ENCODE measurements at regions of chrX and their contacts with region 1.

Region 1: DNA sequence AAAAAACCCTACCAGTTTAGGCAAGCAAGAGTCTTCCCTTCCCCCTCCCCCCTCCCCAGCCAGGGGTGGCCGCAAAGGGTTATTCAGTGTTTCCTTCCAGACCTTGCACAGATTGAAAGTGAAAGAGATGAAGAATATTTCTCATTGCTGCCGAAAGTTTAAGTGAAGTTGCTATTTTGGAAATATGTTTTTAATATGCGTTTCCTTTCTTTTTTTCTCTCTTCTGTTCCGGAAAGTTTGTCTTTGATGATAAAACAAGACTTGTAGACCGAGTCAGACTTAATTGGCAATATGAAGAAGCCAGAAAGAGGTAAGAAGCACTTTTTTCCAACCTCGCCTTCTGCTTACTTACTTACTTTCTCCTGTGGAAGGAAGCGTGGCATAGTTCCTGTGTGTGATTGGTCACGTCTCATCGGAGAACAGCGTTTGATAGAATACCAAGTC is 58.5 kb upstream of the CLCN4 start:
- DNase-seq: peak; percentile 81
- ATAC-seq: peak; percentile 71
- H3K4me3 Mint-ChIP-seq: peak overlapping the region; percentile 67
- H3K27ac Mint-ChIP-seq: peak overlapping the region; percentile 94
- H3K4me1 Mint-ChIP-seq: peaks cover 49% of the 10 kb centered on the region
- H3K27me3 Mint-ChIP-seq: no peaks in the 10 kb centered on the region

Region 2: DNA sequence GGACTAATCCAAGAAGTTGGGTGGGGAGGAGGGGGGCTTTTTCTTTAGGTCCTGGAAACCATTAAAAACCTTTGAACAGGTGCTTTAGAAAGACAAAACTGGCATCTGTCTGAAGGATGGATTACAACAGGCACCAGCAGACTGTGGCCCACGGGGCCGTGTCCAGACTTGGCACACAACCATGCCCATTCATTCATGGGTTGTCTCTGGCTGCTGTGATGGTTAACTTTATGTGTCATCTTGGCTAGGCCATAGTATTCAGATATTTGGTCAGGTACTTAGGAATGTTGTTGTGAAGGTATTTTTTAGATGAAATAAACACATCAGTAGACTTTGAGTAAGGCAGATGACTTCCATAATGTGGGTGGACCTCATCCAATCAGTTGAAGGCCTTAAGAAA is 587.9 kb before region 1 on chrX:
- CTCF ChIA-PET with region 1: no interaction called
- POLR2A ChIA-PET with region 1: no interaction called
- intact Hi-C with region 1: no loop called
- DNase-seq: no peak
- ATAC-seq: no peak
- H3K4me3 Mint-ChIP-seq: no peak overlapping the region
- H3K27ac Mint-ChIP-seq: no peak overlapping the region
- H3K4me1 Mint-ChIP-seq: peaks cover 14% of the 10 kb centered on the region
- H3K27me3 Mint-ChIP-seq: no peaks in the 10 kb centered on the region

Region 3: GRCh38 chrX:10083809-10084208 is 14.5 kb before region 1 on chrX:
- CTCF ChIA-PET with region 1: interaction called, 5 read pairs
- POLR2A ChIA-PET with region 1: interaction called, 7 read pairs
- intact Hi-C with region 1: loop called (anchors 1 kb)
- DNase-seq: no peak
- ATAC-seq: no peak
- H3K4me3 Mint-ChIP-seq: no peak overlapping the region
- H3K27ac Mint-ChIP-seq: no peak overlapping the region
- H3K4me1 Mint-ChIP-seq: peaks cover 35% of the 10 kb centered on the region
- H3K27me3 Mint-ChIP-seq: no peaks in the 10 kb centered on the region

Region 4: DNA sequence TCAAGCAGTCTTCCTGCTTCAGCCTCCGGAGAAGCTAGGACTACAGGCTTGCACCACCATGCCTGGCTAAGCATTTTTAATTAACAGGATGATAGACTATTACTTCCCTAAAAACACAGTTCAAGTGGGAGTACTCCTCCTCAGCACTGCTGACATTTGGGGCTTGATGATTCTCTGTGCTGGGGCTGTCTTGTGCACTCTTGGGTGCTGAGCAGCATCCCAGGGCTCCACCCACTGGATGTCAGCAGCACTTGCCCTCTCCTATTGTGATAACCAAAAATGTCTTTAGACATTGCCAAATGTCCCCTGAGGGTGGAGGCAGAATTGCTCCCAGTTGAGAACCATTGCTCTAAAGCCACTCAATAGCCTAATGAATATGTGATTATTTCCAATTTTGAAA is 118.9 kb after region 1 on chrX:
- CTCF ChIA-PET with region 1: no interaction called
- POLR2A ChIA-PET with region 1: no interaction called
- intact Hi-C with region 1: no loop called
- DNase-seq: no peak
- ATAC-seq: no peak
- H3K4me3 Mint-ChIP-seq: no peak overlapping the region
- H3K27ac Mint-ChIP-seq: no peak overlapping the region
- H3K4me1 Mint-ChIP-seq: no peaks in the 10 kb centered on the region
- H3K27me3 Mint-ChIP-seq: no peaks in the 10 kb centered on the region

Region 5: DNA sequence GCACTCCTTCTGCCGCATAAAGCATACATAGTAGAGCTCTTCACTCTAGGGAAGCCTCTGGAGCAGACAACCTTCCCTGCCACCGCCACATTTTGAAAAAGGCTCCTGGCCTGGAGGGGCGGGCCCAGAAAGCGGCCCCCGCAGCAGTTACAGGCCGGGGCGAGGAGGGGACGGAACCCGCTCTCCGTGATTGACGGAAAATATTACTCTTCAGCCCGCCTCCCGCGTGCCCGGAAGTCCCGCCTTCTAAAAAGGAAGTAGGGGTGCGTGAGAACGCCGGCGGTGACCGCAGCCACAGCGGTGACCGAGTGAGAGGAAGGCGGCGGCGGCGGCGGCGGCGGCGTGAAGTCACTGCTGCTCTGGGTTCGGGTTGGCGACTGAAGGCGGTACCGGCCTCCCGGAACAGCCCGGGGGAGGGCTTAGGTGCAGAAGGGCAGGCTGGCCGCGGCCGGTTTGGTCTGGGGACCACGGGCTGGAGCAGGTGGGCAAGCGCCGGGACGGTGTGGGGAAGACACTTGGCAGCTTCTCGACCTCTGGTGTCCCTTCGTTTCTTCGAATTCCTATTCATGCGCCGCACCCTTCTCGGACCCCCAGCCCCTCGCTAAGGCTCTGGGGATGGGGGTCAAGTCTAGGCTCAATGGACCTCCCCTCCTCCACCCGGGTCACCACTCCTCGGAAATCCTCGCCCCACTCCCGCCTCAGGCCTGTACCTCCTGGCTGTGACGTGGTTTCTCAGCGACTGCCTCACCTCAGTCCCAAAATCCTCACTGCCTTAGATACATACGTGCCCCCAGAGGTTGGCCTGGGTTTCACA is 1013.0 kb after region 1 on chrX and contains the start of gene HCCS:
- CTCF ChIA-PET with region 1: no interaction called
- POLR2A ChIA-PET with region 1: no interaction called
- intact Hi-C with region 1: loop called in 1 of 2 experiments (anchors 5 kb)
- DNase-seq: peak; percentile 88
- ATAC-seq: peak; percentile 92
- H3K4me3 Mint-ChIP-seq: no peak within 1 kb of the TSS
- H3K27ac Mint-ChIP-seq: peak within 1 kb of the TSS; percentile 95
- H3K4me1 Mint-ChIP-seq: peaks cover 22% of the 10 kb centered on the region
- H3K27me3 Mint-ChIP-seq: no peaks in the 10 kb centered on the region
- total RNA-seq, gene HCCS: 24.4 to 24.7 TPM

Measured in activated CD4-positive, alpha-beta T cell treated with anti-CD3 and anti-CD28 coated beads for 36 hours (primary cell).